PC-9 (cell line): ENCODE measurements at regions of chr20 and their contacts with region 1.

Region 1: GRCh38 chr20:55893031-55893430 is 112.3 kb downstream of the CBLN4 start:
- DNase-seq: no peak
- H3K4me3 ChIP-seq: no peak overlapping the region
- H3K27ac ChIP-seq: no peak overlapping the region
- H3K4me1 ChIP-seq: no peaks in the 10 kb centered on the region
- H3K27me3 ChIP-seq: no peaks in the 10 kb centered on the region
- CTCF ChIP-seq: no peak

Region 2: DNA sequence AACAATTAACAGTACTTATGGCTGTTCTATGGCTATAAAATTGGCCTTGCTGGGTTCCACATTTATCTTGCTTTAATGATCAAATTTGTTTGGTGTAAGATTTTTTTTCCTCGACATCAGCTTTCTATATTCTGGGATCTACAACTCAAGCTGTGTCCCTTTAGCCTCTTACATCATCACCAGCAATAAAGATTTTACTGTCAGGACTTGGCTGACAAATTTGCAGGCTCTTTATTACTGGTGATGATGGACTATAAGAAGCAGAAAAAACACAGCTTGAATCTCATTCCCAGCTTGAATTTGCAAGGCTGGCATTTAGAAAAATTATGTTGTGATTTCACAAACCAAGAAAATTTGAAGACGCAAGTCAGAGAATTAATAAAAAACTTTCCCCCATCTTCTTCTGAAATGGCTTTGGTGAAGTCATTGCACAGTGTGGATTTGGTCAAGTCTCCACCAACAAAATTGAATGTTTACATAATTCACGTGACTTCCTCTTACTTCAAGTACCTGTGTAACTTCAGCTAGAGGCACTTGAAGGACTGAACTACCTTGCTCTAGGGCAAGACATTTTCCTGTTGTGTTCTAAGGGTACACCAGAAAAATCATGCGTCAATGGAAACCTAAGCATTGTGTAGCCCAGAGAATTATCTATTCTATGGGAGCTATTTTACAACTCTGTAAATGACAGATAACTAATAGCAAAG is 62.8 kb before region 1 on chr20:
- CTCF ChIA-PET with region 1: no interaction called
- POLR2A ChIA-PET with region 1: no interaction called
- intact Hi-C with region 1: no loop called
- DNase-seq: no peak
- H3K4me3 ChIP-seq: no peak overlapping the region
- H3K27ac ChIP-seq: no peak overlapping the region
- H3K4me1 ChIP-seq: no peaks in the 10 kb centered on the region
- H3K27me3 ChIP-seq: 0 out of 2 replicates have a peak, but pooled peaks cover 3% of the 10 kb centered on the region
- CTCF ChIP-seq: no peak

Region 3: DNA sequence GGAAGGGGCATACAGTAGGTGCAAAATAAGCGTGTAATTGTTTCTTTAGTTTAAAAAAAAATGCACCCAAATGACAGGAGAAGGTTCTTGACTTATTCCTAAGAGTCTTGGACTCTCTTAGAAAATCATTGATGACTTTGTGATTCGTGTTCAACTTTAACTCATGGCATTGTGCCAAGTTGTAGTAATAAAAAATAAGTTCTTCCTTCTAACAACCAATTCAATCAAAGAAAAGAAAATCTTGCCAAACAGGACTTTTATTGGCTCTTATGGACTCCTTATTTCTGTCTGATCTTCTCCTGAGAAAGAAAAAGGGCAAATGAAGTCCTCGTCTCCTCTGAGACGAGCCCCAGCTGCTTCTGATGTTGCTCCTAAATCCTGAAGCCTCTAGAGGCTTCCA is 97.0 kb after region 1 on chr20:
- CTCF ChIA-PET with region 1: no interaction called
- POLR2A ChIA-PET with region 1: no interaction called
- intact Hi-C with region 1: no loop called
- DNase-seq: no peak
- H3K4me3 ChIP-seq: no peak overlapping the region
- H3K27ac ChIP-seq: no peak overlapping the region
- H3K4me1 ChIP-seq: no peaks in the 10 kb centered on the region
- H3K27me3 ChIP-seq: peaks cover 26% of the 10 kb centered on the region
- CTCF ChIP-seq: no peak

Region 4: DNA sequence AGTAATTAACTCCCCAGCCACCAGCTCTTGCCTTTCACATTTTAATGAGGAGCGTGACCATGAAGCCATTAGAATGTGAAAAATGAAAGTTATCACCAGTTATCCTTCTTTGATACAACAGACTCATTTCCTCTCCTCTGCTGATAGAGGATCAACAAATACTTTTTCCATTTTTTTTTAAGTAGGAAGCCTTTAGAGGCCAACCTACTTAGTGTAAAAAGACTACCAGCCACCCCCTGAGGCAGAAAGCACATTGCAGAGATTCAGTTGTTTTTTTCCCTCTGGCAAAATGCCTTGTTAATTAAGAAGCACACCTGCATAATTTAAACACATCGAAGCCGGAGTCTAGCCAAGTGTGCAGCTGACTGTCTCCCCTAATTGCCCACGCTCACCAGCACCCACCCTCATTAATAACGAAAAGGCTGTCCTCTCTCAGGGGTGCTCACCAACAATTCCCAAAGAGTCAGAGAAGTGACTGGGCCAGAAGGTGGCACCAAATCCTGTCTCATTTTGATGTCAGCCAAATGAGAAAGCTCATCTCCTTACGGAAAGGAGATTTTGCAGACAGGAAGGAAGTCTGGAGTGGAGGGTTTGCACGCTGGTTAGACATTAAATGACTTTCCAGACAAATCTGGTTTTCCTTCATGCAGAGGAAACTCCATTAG is 294.6 kb after region 1 on chr20:
- CTCF ChIA-PET with region 1: interaction called, 10 read pairs
- POLR2A ChIA-PET with region 1: no interaction called
- intact Hi-C with region 1: no loop called
- DNase-seq: no peak
- H3K4me3 ChIP-seq: no peak overlapping the region
- H3K27ac ChIP-seq: no peak overlapping the region
- H3K4me1 ChIP-seq: no peaks in the 10 kb centered on the region
- H3K27me3 ChIP-seq: peaks cover 29% of the 10 kb centered on the region
- CTCF ChIP-seq: peak; percentile 55